PC-3 (cell line): ENCODE measurements at regions of chr14 and their contacts with region 1.

Region 1: GRCh38 chr14:64950889-64951288 is 8.3 kb upstream of the GPX2 start:
- DNase-seq: no peak
- ATAC-seq: no peak
- H3K4me3 ChIP-seq: no peak overlapping the region
- H3K27ac ChIP-seq: no peak overlapping the region
- H3K4me1 ChIP-seq: no peaks in the 10 kb centered on the region
- H3K27me3 ChIP-seq: no peaks in the 10 kb centered on the region
- CTCF ChIP-seq: no peak

Region 2: GRCh38 chr14:63867933-63868921 is 1082.7 kb before region 1 on chr14:
- CTCF ChIA-PET with region 1: no interaction called
- POLR2A ChIA-PET with region 1: interaction called, 11 read pairs
- intact Hi-C with region 1: no loop called
- DNase-seq: peak; percentile 51
- ATAC-seq: no peak
- H3K4me3 ChIP-seq: no peak overlapping the region
- H3K27ac ChIP-seq: no peak overlapping the region
- H3K4me1 ChIP-seq: peaks cover 19% of the 10 kb centered on the region
- H3K27me3 ChIP-seq: no peaks in the 10 kb centered on the region
- CTCF ChIP-seq: no peak